ENCODE measurements at regions of chr10 and their contacts with region 1.

Region 1: GRCh38 chr10:21533467-21534279 is at the start of gene MLLT10:
- DNase-seq: peak; percentile 84 to 97 (median 92)

Region 2: GRCh38 chr10:21364196-21365114 is 169.2 kb before region 1 on chr10:
- intact Hi-C with region 1: no loop called
- DNase-seq: no peak

Region 3: GRCh38 chr10:21495752-21496342 is 37.8 kb before region 1 on chr10:
- intact Hi-C with region 1: loop called (anchors 2 kb)
- DNase-seq: peak; percentile 79 to 96 (median 89)

Region 4: GRCh38 chr10:21584834-21585530 is 51.3 kb after region 1 on chr10:
- intact Hi-C with region 1: no loop called
- DNase-seq: no peak

Region 5: DNA sequence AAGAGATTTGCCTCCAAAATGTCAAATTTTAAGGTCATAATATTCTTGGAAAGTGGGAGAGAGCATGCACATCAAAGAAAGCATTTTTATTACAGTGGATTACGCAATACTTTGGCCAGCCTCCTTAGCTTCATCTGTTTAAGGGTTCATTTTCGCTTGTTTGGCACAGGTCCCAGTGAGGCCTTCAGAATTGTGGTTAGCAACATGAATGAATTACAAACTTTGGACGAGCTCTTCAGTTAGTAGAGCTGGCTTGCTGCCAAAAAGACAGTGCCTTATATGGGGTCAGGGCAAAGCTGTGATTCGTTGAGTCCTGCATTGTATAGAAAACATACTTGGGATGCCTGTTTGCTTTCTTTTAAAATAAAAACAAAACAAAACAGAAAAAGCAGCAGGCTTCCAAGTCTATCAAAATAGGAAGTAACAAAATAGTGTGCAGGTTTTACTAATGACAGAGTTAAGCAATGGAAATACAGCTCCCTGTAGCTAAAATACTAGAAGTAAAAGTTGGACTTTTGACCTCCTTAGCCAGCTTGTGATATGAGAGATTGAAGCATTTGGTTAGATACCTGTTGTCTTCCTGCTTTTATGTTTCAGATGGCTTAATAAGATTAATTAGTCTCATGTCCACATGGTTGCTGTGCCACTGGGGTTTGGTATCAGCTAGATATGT is 191.2 kb after region 1 on chr10:
- intact Hi-C with region 1: loop called (anchors 10 kb)
- DNase-seq: peak; percentile 19 to 94 (median 80)

Region 6: GRCh38 chr10:22003079-22003913 is 469.6 kb after region 1 on chr10 and contains the start of gene DNAJC1:
- intact Hi-C with region 1: no loop called
- DNase-seq: peak; percentile 97 to 99 (median 99)